ENCODE measurements at regions of chr10 and their contacts with region 1.

Region 1: DNA sequence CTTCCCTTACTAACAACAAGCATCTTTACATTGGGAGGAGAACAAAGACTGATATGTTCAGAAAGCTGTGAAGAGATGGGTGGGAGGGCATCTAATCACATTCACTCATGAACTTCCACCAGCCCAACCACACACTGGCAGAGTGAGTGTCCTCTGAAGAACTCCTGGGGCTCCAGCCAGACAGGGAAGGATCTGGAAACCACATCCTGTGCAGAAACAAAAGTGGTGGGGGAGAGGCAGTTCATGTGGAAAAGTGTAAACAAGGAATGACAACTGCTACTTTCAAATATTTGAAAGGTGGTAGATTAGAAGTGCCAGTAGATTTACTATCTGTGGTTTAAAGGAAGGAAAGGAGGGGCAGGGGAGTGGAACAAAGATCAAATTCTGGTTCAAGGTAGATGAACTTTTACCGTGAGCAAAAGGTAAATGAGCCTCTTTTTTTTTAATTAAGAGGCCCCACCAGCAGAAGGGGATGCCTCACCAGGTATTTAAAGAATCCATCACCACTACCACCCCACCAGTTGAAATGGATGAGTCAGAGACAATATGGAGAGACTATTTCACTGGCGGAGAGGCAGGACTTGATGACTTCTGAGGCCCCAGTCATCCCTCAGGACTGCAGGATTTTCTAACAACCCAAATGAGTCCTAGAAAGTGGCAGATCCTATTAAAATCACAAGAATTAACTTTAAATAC is 34.5 kb downstream of the GOT1 start:
- DNase-seq: no peak
- ATAC-seq: no peak
- H3K4me3 Mint-ChIP-seq: no peak overlapping the region
- H3K27ac Mint-ChIP-seq: no peak overlapping the region
- H3K4me1 Mint-ChIP-seq: peaks cover 8% of the 10 kb centered on the region
- H3K27me3 Mint-ChIP-seq: no peaks in the 10 kb centered on the region

Region 2: GRCh38 chr10:99548041-99548530 is 152.2 kb after region 1 on chr10:
- CTCF ChIA-PET with region 1: no interaction called
- POLR2A ChIA-PET with region 1: no interaction called
- intact Hi-C with region 1: loop called in 1 of 2 experiments (anchors 2 kb)
- DNase-seq: peak; percentile 48
- ATAC-seq: peak; percentile 65
- H3K4me3 Mint-ChIP-seq: no peak overlapping the region
- H3K27ac Mint-ChIP-seq: no peak overlapping the region
- H3K4me1 Mint-ChIP-seq: no peaks in the 10 kb centered on the region
- H3K27me3 Mint-ChIP-seq: peaks cover 36% of the 10 kb centered on the region

Measured in activated CD4-positive, alpha-beta T cell treated with anti-CD3 and anti-CD28 coated beads for 36 hours (primary cell).